OCI-LY7 (cell line): ENCODE measurements at regions of chr6 and their contacts with region 1.

Region 1: DNA sequence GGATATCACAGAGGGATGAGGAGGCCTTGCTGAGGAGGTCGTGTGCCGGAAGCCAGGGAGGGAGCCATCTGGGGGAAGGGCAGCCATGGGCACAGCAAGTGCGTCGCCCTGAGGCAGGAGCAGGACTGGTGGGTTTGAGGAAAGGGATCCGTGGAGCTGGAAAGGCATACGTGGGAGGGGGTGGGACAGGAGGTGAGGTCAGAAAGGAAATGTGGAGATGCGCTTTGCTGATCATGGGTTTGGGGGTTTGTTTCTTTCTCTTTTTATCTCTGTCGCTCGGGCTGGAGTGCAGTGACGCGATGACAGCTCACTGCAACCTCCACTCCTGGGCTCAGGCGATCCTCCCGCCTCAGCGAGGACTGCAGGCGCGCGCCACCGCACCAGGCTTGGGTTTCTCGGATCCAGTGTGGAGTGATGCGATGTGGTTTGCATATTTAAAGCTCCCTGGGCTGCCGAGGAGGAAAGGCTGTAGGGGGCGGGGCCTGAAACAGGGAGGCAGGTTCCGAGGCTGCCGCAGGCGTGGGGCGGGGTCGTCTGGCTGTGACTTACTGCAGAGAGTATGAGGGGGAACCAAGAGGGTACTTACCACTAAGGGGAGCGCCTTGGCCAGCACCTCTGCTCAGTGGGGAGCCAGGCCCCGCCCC is 12.5 kb upstream of the BAK1 start:
- DNase-seq: peak; percentile 75
- H3K4me3 ChIP-seq: peak overlapping the region; percentile 58
- H3K27ac ChIP-seq: peak overlapping the region; percentile 81
- H3K4me1 ChIP-seq: peaks cover 69% of the 10 kb centered on the region
- CTCF ChIP-seq: no peak

Region 2: GRCh38 chr6:33607784-33608161 is 15.2 kb after region 1 on chr6:
- CTCF ChIA-PET with region 1: interaction called, 24 read pairs
- POLR2A ChIA-PET with region 1: interaction called, 12 read pairs
- intact Hi-C with region 1: loop called (anchors 2 kb)
- DNase-seq: peak; percentile 68
- H3K4me3 ChIP-seq: no peak overlapping the region
- H3K27ac ChIP-seq: no peak overlapping the region
- H3K4me1 ChIP-seq: peaks cover 20% of the 10 kb centered on the region
- CTCF ChIP-seq: peak; percentile 84

Region 3: DNA sequence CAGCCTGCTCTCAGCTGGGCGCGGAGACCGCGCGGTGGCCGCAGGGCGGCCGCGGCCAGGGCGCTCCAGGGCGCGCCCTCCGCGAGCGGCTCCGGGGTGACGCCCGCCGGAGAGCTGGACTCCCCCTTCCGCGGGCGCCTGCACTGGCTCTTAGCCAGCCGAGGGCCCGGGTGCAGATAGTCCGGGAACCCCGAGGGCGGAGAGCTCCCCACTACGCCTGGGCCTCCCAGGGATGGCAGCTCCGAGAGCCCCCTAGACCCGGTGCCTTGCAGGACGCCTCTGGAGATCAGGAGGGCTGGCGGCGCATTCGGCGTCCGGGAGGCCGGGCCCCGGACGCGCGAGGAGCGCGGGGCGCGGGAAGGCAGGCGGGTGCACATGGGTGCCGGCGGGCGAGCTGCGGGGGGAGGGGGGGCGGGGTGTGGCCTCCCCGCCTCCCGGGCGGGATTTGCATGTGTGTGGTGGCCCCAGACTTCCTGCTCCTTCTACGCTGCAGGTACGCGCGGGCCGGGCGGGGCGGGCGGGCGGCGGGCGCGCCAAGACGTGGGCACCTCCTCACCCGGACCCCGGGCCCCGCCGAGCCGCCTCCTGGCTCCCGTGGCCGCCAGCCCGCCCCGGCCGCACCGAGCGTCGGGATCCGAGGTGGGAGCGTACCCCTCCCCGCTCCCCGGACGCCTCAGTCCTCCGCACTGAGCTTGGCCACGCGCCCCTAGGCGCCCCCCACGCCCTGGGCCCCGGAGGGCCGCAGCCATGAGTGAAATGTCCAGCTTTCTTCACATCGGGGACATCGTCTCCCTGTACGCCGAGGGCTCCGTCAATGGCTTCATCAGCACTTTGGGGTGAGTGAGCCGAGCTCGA is 28.6 kb after region 1 on chr6 and contains the start of gene ITPR3:
- CTCF ChIA-PET with region 1: interaction called, 3 read pairs
- POLR2A ChIA-PET with region 1: interaction called, 5 read pairs
- intact Hi-C with region 1: loop called (anchors 1 kb)
- DNase-seq: peak; percentile 93
- H3K4me3 ChIP-seq: peak within 1 kb of the TSS; percentile 98
- H3K27ac ChIP-seq: peak within 1 kb of the TSS; percentile 75
- H3K4me1 ChIP-seq: peaks cover 56% of the 10 kb centered on the region
- CTCF ChIP-seq: no peak; the same call in 1 of the 2 replicates
- total RNA-seq, gene ITPR3: 47.8 and 56.6 TPM in 2 replicates